ENCODE measurements at regions of chr10 and their contacts with region 1.

Region 1: DNA sequence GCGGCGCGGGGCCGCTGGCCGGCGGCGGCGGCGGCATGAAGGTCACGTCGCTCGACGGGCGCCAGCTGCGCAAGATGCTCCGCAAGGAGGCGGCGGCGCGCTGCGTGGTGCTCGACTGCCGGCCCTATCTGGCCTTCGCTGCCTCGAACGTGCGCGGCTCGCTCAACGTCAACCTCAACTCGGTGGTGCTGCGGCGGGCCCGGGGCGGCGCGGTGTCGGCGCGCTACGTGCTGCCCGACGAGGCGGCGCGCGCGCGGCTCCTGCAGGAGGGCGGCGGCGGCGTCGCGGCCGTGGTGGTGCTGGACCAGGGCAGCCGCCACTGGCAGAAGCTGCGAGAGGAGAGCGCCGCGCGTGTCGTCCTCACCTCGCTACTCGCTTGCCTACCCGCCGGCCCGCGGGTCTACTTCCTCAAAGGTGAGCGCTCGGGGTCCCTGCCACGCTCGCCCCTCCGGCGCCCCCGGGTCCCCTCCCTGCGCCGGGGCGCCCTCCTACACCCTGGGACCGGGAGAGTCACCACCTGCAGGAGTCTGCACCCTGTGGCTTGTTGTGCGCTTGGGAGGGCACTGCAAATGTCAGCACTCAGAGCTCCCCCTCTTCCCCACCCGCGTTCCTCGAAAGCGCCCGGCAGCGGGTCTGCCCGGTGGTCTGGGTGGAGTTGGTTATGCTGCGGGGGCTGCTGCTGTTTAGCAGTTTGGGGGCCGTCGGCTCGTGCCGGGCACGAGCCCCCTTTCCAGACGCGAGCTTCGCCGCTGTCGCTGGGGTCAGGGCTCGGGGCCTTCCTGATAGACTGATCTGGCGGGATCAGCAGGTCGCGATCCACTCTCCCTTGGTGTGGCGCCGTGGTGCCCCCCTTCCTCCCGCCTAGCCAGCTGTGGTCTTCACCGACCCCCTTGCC is 627 bp downstream of the DUSP5 start:
- DNase-seq: no peak
- H3K4me3 ChIP-seq: peak overlapping the region; percentile 86
- H3K27ac ChIP-seq: peak overlapping the region; percentile 70
- H3K27me3 ChIP-seq: no peaks in the 10 kb centered on the region
- CTCF ChIP-seq: no peak

Region 2: DNA sequence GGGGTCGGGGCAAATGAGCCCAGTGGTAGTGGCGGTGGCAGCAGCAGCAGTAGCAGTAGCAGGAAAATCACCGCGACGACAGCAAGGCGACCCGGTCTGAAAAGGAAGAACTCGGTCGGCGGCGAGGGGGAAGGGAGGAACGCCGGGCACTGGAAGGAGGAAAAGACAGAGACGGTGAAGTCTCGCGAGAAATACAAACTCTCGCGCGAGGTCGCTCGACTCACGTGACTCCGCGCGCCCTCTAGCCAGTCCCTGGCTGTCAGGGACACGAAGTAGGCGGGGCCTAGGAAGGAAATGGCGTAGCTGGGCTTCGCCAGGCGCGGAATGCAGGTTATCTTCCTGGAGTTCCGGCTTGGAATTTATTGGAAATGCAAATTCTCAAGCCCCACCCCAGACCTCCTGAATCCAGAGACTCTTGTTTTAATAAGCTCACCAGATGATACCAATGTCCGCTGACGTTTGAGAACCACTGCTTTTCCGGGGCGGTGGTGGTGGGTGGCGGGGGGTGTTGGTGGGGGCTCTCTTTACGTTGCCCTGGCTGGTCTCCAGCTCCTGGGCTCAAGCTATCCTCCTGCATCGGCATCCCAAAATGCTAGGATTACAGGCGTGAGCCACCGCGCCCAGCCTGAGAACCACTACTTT is 193.4 kb before region 1 on chr10 and contains the start of gene SMNDC1:
- CTCF ChIA-PET with region 1: interaction called, 17 read pairs
- POLR2A ChIA-PET with region 1: no interaction called
- DNase-seq: peak; percentile 95
- H3K4me3 ChIP-seq: peak within 1 kb of the TSS; percentile 80
- H3K27ac ChIP-seq: peak within 1 kb of the TSS; percentile 92
- H3K27me3 ChIP-seq: no peaks in the 10 kb centered on the region
- CTCF ChIP-seq: no peak
- polyA plus RNA-seq, gene SMNDC1: 20.1 and 26.4 TPM in 2 replicates

Region 3: GRCh38 chr10:110354322-110354766 is 144.0 kb before region 1 on chr10:
- CTCF ChIA-PET with region 1: interaction called, 29 read pairs
- POLR2A ChIA-PET with region 1: interaction called, 9 read pairs
- DNase-seq: peak; percentile 59
- H3K4me3 ChIP-seq: no peak overlapping the region
- H3K27ac ChIP-seq: peak overlapping the region; percentile 96
- H3K27me3 ChIP-seq: no peaks in the 10 kb centered on the region
- CTCF ChIP-seq: peak; percentile 82

Region 4: DNA sequence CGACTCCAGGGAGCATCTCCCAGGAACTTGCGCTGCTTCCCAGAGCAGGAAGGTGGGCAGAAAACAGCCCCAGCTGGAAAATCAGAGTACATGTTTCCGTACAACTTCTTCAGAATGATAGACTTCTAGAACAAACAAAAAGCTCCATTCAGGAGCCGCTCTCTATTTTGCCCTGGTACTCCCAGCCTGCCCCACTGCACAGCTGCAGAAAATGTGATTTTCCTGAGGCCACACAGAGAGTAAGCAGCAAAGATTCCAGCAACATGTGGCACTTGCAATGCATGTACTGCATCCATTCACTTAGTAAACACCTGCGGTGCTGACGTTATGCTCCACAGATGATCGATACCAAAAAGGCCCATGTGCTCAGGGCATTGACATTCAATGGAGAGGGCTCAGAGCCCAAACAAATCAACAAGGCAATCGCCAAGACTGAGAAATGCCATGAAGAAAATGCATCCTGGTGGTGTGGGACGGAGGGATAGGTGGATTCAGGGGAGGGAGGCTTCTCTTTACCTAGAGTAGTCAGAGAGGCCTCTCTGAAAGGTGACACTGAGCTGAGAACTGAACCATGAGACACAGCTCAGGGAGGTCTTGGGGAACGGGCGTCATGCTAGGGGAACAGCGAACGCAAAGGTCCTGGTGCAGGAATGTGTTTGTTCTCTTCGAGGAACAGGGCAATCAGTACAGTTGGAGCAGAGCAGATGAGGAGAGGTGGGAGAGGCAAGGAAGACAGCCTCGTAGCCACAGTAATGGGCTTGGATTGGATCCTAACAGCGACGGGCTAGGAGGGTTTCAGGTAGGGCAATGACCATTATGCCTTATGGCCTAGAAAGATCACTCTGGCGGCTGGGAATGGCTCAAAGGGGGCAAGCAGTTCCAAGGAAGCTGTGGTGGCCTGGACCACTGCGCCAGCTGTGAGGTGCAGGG is 35.9 kb before region 1 on chr10:
- CTCF ChIA-PET with region 1: no interaction called
- POLR2A ChIA-PET with region 1: no interaction called
- DNase-seq: no peak
- H3K4me3 ChIP-seq: no peak overlapping the region
- H3K27ac ChIP-seq: no peak overlapping the region
- H3K27me3 ChIP-seq: no peaks in the 10 kb centered on the region
- CTCF ChIP-seq: no peak

Region 5: DNA sequence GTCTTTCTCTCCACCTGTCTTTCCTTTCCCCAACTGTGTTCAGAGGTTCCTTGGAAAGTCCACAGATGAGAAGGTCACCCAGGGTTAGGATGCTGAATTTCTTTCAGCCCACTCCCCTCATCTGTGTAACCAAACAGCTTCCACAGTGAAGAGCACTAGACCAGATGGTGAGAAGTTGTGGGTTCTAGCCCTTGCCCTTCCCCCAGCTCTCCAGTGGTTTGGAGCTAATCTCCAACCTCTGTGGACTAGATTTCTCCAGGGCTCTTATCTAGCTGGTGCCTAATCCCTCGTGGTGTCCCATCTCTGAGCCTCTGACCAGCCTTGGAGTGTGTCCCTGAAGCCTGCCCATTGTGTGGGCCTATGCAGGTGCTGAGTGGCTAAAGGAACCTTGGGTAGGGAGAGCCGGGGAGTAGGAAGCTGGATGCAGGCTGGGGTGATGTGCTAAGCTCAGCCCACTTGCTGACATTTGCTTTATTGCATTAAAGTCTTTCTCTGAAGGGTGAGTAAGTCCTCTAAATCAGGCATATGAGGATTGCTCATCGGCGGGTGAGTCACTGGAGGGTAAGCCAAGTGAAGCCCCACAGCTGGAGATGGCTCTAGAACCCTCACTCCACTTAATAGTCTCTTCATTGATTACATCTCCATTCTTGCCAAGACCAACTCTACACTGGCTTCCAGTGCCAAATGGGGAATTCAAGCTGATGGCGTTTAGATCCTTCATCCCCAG is 14.3 kb after region 1 on chr10:
- CTCF ChIA-PET with region 1: no interaction called
- POLR2A ChIA-PET with region 1: interaction called, 19 read pairs
- DNase-seq: peak; percentile 74
- H3K4me3 ChIP-seq: no peak overlapping the region
- H3K27ac ChIP-seq: peak overlapping the region; percentile 90
- H3K27me3 ChIP-seq: no peaks in the 10 kb centered on the region
- CTCF ChIP-seq: no peak

Measured in AG04450 (cell line).